Activated T-helper 1 cell treated with anti-CD3 and anti-CD28 coated beads, Interleukin-12 subunit alpha, Interleukin-12 subunit beta, Interleukin-2, Interleukin-4 antibody, amounts not matched to agents 30 ng/mL and 10 ng/mL and 1 ng/mL, durations not matched to agents 14 hours and 24 hours and 36 hours (primary cell): ENCODE measurements at regions of chr6 and their contacts with region 1.

Region 1: DNA sequence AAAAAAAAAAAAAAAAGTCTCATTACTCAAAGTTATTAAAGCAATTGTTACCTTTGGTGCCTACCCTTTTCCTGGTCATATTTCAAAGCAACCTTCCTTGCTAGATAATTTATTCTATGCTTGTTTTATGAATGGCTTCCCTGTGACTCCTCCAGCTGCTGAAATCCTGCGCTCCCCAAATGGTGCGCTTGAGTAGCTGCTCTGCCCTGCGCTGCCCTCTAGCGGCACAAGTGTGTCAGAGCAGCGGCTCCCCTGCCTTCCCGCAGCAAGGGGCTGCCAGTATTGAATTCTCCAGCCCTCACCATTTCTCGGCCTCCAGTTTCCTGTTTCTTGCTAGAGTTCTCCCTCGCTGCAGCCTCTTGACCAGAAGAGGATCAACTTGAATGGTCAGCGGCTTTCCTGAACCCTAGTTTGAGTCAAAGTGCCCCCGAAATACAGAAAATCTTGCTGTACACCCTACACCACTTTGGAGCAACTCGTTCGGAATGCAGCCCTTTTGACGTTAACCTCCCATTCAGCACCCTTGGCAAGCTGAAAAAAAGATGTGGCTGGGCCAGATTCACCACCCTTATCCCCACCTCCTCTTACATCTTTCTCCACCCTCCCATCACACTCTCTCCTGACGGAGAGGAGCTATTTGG is 60.4 kb upstream of the KLHL31 start:
- DNase-seq: peak; percentile 60
- H3K4me3 Mint-ChIP-seq: no peak overlapping the region
- H3K27ac Mint-ChIP-seq: no peak overlapping the region
- H3K4me1 Mint-ChIP-seq: peaks cover 14% of the 10 kb centered on the region
- H3K27me3 Mint-ChIP-seq: peaks cover 14% of the 10 kb centered on the region

Region 2: DNA sequence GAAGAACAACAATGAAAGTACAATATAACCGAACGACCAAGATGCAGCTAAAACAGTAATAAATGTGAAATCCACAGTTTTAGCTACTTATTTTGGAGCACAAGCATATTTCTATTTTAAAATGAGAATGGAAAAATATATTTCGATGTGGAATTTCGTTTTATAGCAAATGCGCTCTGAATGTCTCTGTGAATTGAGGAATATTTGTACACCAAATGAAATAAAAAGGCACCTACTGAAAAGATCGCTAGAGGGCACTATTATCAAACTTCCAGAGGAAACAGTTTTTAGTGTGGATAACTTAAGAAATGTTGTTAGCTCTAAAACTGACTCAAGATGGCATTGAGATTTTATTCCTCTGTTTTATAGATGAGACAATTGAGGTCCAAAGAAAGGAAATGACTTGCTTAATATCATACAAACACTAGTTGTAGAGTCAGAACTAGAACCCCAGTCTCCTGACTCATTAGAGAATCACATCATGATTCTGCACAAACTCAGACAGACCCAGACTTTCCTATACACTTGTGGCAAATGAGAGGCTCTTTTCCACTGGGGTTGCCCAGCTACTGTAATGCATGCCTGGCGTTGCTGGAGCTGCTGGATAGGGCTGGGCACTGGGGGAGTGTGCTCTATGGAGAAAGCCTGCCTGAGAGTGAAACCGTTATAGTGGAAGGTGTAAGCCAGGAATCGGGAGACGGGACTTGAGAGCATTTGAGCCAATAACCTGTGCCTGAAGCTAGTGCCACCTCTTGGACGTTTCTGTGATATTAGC is 232.9 kb before region 1 on chr6:
- intact Hi-C with region 1: loop called (anchors 1 kb)
- DNase-seq: no peak
- H3K4me3 Mint-ChIP-seq: no peak overlapping the region
- H3K27ac Mint-ChIP-seq: peak overlapping the region; percentile 25
- H3K4me1 Mint-ChIP-seq: peaks cover 15% of the 10 kb centered on the region
- H3K27me3 Mint-ChIP-seq: peaks cover 22% of the 10 kb centered on the region

Region 3: GRCh38 chr6:53794720-53795253 is 68.9 kb after region 1 on chr6 and contains the start of gene LRRC1:
- intact Hi-C with region 1: loop called (anchors 2 kb)
- DNase-seq: peak; percentile 86
- H3K4me3 Mint-ChIP-seq: peak within 1 kb of the TSS; percentile 96
- H3K27ac Mint-ChIP-seq: peak within 1 kb of the TSS; percentile 78
- H3K4me1 Mint-ChIP-seq: peaks cover 41% of the 10 kb centered on the region
- H3K27me3 Mint-ChIP-seq: peaks cover 53% of the 10 kb centered on the region
- total RNA-seq, gene LRRC1: 1.7 and 1.9 TPM in 2 replicates

Region 4: DNA sequence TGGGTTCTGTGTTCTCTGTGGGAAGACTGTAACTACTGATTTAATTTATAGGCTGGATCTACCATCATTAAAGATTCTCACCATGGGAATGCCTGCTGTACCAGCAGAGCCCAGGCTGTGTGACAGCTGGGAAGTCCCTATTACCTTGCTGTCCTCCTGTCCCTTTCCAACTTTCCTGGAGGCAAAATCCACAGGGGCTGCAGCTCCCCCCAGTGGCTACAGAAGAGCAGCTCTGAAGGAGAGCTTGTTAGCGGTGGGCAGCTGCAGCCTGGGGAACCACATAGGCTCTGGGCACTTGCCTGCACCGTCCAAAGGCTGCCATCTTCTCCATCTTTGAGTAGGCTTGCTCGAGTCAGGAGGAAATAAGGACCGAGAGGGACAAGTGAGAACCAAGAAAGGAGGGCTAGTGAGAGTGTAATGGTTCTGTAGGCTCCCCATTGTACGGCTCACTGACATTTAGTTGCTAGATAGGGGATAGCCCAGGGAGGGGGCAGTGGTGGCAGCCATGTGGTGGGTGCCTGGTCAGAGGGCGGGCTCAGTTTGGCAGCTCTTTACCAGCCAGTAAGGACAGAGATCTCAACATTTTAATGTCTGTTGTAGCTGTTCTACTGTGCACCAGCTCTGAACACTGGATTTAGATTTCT is 230.3 kb after region 1 on chr6:
- intact Hi-C with region 1: loop called (anchors 2 kb)
- DNase-seq: no peak
- H3K4me3 Mint-ChIP-seq: no peak overlapping the region
- H3K27ac Mint-ChIP-seq: no peak overlapping the region
- H3K4me1 Mint-ChIP-seq: no peaks in the 10 kb centered on the region
- H3K27me3 Mint-ChIP-seq: peaks cover 2% of the 10 kb centered on the region

Region 5: DNA sequence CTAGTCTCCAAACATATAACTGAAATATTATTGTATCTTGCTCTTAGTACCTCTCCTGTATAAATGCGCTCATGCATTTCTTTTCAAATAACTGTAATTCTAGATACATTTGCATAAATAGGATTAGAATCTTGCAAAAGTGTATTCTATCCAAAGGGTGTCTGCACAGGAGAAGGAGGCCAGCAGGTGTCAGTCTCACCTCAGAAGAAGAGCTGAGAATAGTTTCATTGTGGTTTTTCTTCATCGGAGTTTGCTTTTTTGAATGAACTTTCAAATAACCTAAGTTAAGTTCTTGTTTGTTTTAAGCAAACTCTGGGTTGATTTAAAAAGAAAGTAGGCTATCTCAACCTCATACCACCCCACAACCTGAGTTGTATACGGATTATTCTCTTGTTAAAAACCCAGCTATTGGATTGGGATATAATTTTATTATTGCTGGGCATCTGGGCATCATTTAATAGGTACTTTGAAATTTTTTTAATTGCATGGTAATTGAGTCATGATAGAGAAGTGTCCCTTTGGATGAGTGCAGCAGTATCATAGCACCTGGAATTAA is 260.3 kb after region 1 on chr6:
- intact Hi-C with region 1: no loop called
- DNase-seq: no peak
- H3K4me3 Mint-ChIP-seq: no peak overlapping the region
- H3K27ac Mint-ChIP-seq: no peak overlapping the region
- H3K4me1 Mint-ChIP-seq: no peaks in the 10 kb centered on the region
- H3K27me3 Mint-ChIP-seq: peaks cover 3% of the 10 kb centered on the region